ENCODE measurements at regions of chr2 and their contacts with region 1.

Region 1: GRCh38 chr2:31170071-31170698 is 31.9 kb upstream of the GALNT14 start:
- DNase-seq: peak; percentile 23 to 72
- H3K4me3 ChIP-seq: no peak overlapping the region
- H3K27ac ChIP-seq: no peak overlapping the region
- H3K4me1 ChIP-seq: no peaks in the 10 kb centered on the region
- H3K27me3 ChIP-seq: no peaks in the 10 kb centered on the region
- CTCF ChIP-seq: peak; percentile 86 to 96 (median 96)
- EP300 ChIP-seq: no peak
- POLR2A ChIP-seq: no peak
- RAD21 ChIP-seq: peak; percentile 97 to 98

Region 2: GRCh38 chr2:30721668-30722647 is 448.2 kb before region 1 on chr2:
- CTCF ChIA-PET with region 1: interaction called, 117 read pairs
- POLR2A ChIA-PET with region 1: no interaction called
- DNase-seq: peak in 1 of 2 experiments; percentile 19
- H3K4me3 ChIP-seq: no peak overlapping the region
- H3K27ac ChIP-seq: no peak overlapping the region
- H3K4me1 ChIP-seq: no peaks in the 10 kb centered on the region
- H3K27me3 ChIP-seq: no peaks in the 10 kb centered on the region
- CTCF ChIP-seq: no peak
- EP300 ChIP-seq: no peak
- POLR2A ChIP-seq: no peak
- RAD21 ChIP-seq: no peak

Region 3: GRCh38 chr2:30997979-30998378 is 172.2 kb before region 1 on chr2:
- CTCF ChIA-PET with region 1: no interaction called
- POLR2A ChIA-PET with region 1: no interaction called
- DNase-seq: no peak
- H3K4me3 ChIP-seq: no peak overlapping the region
- H3K27ac ChIP-seq: no peak overlapping the region
- H3K4me1 ChIP-seq: no peaks in the 10 kb centered on the region
- H3K27me3 ChIP-seq: no peaks in the 10 kb centered on the region
- CTCF ChIP-seq: no peak
- EP300 ChIP-seq: no peak
- POLR2A ChIP-seq: no peak
- RAD21 ChIP-seq: no peak

Region 4: DNA sequence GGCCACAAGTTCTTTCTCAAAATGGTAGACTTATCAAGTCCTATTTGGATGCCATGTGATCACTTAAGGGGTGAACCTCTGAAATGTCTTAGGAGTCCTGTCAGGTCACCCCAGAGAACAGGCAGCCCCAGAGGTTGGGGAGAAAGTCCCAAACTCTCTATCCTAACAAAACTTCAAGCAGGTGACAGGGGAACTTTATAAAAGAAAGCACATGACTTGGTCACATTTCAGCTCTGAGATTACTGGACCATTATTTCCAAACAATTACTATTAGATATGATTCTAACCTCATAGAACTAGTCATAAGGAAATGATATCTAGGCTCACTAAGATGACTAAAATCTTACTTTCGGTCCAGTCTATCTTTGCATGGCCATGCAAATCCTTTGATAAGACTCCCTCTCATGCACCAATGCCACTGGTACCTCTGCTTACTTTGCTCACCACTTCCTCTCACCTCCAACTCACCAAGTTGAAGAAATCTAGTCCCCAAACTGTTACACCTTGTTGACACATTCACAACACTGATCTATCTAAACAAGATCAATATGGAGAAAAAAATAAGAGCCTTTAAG is 139.0 kb before region 1 on chr2:
- CTCF ChIA-PET with region 1: interaction called, 10 read pairs
- POLR2A ChIA-PET with region 1: no interaction called
- DNase-seq: no peak
- H3K4me3 ChIP-seq: no peak overlapping the region
- H3K27ac ChIP-seq: no peak overlapping the region
- H3K4me1 ChIP-seq: peaks cover 0 to 6% (median 0%) of the 10 kb centered on the region in 4 experiments; a peak in 2 of 7 replicates
- H3K27me3 ChIP-seq: no peaks in the 10 kb centered on the region
- CTCF ChIP-seq: no peak
- EP300 ChIP-seq: no peak
- POLR2A ChIP-seq: no peak
- RAD21 ChIP-seq: no peak

Region 5: GRCh38 chr2:31138037-31138962 is 31.9 kb before region 1 on chr2 and contains the start of gene GALNT14:
- CTCF ChIA-PET with region 1: interaction called, 27 read pairs
- POLR2A ChIA-PET with region 1: interaction called, 4 read pairs
- DNase-seq: peak; percentile 33 to 86
- H3K4me3 ChIP-seq: peak within 1 kb of the TSS; percentile 33 to 63 (median 43)
- H3K27ac ChIP-seq: no peak within 1 kb of the TSS
- H3K4me1 ChIP-seq: peaks cover 0 to 5% (median 5%) of the 10 kb centered on the region in 4 experiments; a peak in 4 of 7 replicates
- H3K27me3 ChIP-seq: peaks cover 13 to 50% (median 46%) of the 10 kb centered on the region in 4 experiments
- CTCF ChIP-seq: peak; percentile 41 to 57 (median 47)
- EP300 ChIP-seq: peak in 1 of 2 experiments; percentile 68; a peak in 1 of 3 replicates
- POLR2A ChIP-seq: no peak
- RAD21 ChIP-seq: peak; percentile 38 to 42
- total RNA-seq, gene GALNT14: 10.3 and 13.7 TPM in 2 replicates

Region 6: GRCh38 chr2:31192851-31193392 is 22.7 kb after region 1 on chr2:
- CTCF ChIA-PET with region 1: interaction called, 18 read pairs
- POLR2A ChIA-PET with region 1: no interaction called
- DNase-seq: peak in 1 of 2 experiments; percentile 47
- H3K4me3 ChIP-seq: no peak overlapping the region
- H3K27ac ChIP-seq: no peak overlapping the region
- H3K4me1 ChIP-seq: no peaks in the 10 kb centered on the region; a peak in 1 of 7 replicates
- H3K27me3 ChIP-seq: no peaks in the 10 kb centered on the region; a peak in 1 of 7 replicates
- CTCF ChIP-seq: peak in 2 of 3 experiments; percentile 58 to 60; a peak in 3 of 4 replicates
- EP300 ChIP-seq: no peak
- POLR2A ChIP-seq: no peak
- RAD21 ChIP-seq: peak; percentile 72 to 84